IMR-90 (cell line): ENCODE measurements at regions of chr1 and their contacts with region 1.

Region 1: DNA sequence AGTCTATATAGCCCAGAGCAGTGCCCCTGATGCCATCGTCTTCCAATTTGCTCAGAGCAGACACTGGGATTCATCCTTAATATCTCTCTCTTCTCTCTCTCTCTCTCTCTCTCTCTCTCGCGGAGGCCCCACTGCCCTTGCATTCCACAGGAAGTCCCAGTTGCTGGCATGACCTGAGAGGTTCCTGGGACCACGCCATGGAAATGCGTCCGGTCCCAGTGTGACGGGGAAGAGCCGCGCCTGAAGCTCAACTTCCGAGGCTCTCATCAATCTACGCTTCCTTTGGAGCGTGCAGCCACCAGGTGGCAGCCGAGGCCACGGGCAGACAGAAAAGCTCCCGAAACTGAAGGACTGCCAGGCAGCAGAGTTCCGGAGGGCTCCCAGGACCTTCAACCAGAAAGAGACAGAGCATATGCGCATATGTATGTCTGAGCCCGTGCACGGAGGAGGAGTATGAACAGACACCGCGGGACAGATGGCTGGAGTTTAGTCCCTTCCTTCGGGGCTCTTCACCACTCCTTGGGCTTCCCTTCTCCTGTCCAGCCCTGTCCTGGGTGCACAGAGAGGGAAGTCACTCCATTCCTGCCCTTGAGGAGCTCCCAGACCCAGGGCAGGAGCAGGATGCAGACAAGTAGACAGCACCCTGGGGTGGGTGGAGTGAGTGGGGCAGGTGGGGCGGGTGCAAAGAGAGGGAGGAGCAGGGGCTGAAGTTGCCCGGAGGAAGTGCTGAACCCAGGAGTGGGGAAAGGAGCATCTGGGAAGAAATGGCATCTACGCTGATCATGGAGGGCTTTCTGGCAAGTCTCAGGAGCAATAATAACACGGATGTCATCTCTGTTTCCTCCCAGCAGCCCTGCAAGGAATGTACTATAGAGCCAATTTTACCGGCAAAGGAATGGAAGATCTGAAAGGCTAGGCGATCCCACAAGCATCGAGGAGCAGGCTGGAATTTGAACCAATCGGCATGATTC is 10.5 kb downstream of the PDZK1IP1 start:
- DNase-seq: peak; percentile 91
- ATAC-seq: peak; percentile 91
- H3K4me3 ChIP-seq: peak overlapping the region; percentile 27
- H3K27ac ChIP-seq: no peak overlapping the region
- H3K4me1 ChIP-seq: no peaks in the 10 kb centered on the region
- H3K27me3 ChIP-seq: no peaks in the 10 kb centered on the region; the same call in 1 of the 2 replicates
- CTCF ChIP-seq: peak; percentile 98
- POLR2A ChIP-seq: no peak
- RAD21 ChIP-seq: peak; percentile 93

Region 2: DNA sequence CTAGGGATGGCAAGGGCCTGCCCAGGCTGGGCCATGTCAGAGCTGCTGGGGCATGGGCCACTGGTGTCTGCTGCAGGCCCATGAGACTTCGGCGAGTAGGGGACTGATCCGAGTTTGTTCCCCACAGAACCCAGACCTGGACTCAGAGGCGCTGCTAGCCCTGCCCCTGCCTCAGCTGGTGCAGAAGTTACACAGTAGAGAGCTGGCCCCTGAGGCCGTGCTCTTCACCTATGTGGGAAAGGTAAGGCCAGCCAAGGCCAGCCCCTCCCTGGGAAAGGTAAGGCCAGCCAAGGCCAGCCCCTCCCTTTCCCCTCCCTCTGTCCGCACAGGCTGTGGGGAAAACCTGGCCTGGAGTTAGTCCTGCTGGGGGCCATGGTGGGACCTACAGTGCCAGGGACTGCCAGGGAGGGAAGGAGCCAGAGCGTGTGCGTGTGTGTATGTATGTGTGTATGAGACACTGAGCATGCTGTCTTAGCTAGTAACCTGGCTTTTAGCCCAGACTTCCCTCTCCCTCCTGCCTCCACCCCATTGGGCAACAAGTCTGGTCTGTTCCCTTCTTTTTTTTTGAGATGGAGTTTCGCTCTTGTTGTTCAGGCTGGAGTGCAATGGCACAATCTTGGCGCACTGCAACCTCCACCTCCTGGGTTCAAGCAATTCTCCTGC is 777.2 kb before region 1 on chr1:
- CTCF ChIA-PET with region 1: no interaction called
- POLR2A ChIA-PET with region 1: no interaction called
- dilution Hi-C with region 1: no loop called
- in situ Hi-C with region 1: no loop called
- intact Hi-C with region 1: loop called (anchors 10 kb)
- DNase-seq: peak; percentile 95
- ATAC-seq: peak; percentile 86
- H3K4me3 ChIP-seq: no peak overlapping the region
- H3K27ac ChIP-seq: no peak overlapping the region
- H3K4me1 ChIP-seq: no peaks in the 10 kb centered on the region; the same call in 1 of the 2 replicates
- H3K27me3 ChIP-seq: peaks cover 26% of the 10 kb centered on the region
- CTCF ChIP-seq: no peak
- POLR2A ChIP-seq: no peak
- RAD21 ChIP-seq: no peak

Region 3: GRCh38 chr1:46747683-46748288 is 431.5 kb before region 1 on chr1:
- CTCF ChIA-PET with region 1: no interaction called
- POLR2A ChIA-PET with region 1: no interaction called
- dilution Hi-C with region 1: no loop called
- in situ Hi-C with region 1: no loop called
- intact Hi-C with region 1: loop called (anchors 1 kb)
- DNase-seq: peak; percentile 55
- ATAC-seq: peak; percentile 100
- H3K4me3 ChIP-seq: no peak overlapping the region
- H3K27ac ChIP-seq: no peak overlapping the region
- H3K4me1 ChIP-seq: no peaks in the 10 kb centered on the region
- H3K27me3 ChIP-seq: no peaks in the 10 kb centered on the region
- CTCF ChIP-seq: peak; percentile 55
- POLR2A ChIP-seq: no peak
- RAD21 ChIP-seq: peak; percentile 47

Region 4: DNA sequence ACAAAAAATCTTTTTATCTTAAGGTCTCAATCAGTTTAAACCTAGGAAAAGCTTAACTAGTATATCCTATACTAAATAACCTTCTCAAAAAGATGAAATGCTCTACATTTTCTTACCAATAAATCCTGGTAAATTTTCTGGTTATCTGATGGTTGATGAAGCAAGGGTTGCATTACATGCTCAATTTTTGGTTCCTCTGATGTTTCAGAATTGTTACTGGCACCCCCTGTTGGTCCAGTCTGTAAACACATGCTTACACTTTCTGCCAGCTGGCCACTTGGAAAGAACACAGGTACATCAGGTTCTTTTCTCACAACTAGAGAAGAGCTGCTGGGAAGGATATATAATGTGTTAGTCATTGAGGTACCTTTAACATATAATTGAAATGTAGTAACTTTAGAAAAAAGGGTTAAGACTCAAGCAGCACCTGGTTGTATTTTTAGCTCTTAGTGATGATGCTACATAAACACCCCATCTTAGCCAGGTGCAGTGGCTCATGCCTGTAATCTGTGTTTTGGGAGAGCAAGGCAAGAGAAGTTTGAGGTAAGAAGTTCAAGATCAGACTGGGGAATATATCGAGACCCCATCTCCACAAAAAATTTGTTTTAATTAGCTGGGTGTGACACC is 83.6 kb after region 1 on chr1:
- CTCF ChIA-PET with region 1: interaction called, 14 read pairs
- POLR2A ChIA-PET with region 1: no interaction called
- dilution Hi-C with region 1: no loop called
- in situ Hi-C with region 1: no loop called
- intact Hi-C with region 1: no loop called
- DNase-seq: peak; percentile 38
- ATAC-seq: peak; percentile 73
- H3K4me3 ChIP-seq: no peak overlapping the region
- H3K27ac ChIP-seq: no peak overlapping the region
- H3K4me1 ChIP-seq: no peaks in the 10 kb centered on the region
- H3K27me3 ChIP-seq: no peaks in the 10 kb centered on the region
- CTCF ChIP-seq: peak; percentile 56
- POLR2A ChIP-seq: no peak
- RAD21 ChIP-seq: peak; percentile 51

Region 5: DNA sequence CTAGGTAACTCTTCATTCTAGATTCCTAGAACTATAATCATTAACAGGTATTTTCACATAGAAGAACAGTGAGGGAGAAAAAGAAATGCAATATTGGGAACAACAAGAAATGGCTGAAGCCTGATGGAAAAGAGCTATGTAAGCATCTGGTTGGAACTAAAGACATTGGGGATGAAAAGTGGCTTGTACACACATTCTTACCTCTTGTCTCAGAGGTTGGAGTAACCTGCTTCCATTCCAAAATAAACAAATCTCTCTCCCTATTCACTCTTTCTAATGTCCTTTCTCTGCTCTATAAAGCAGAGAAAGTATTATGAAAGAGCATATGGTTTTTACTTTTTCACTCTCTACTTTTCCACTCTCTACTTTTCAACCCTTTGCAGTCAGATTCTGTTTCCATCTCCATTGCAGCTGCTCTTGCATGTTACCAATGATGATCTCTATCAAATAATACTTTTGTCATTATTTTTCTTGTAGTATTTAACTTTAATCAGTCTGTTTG is 191.8 kb after region 1 on chr1:
- CTCF ChIA-PET with region 1: no interaction called
- POLR2A ChIA-PET with region 1: no interaction called
- dilution Hi-C with region 1: no loop called
- in situ Hi-C with region 1: no loop called
- intact Hi-C with region 1: no loop called
- DNase-seq: peak; percentile 70
- ATAC-seq: no peak
- H3K4me3 ChIP-seq: no peak overlapping the region
- H3K27ac ChIP-seq: no peak overlapping the region
- H3K4me1 ChIP-seq: peaks cover 5% of the 10 kb centered on the region; the same call in 1 of the 2 replicates
- H3K27me3 ChIP-seq: no peaks in the 10 kb centered on the region
- CTCF ChIP-seq: no peak
- POLR2A ChIP-seq: no peak
- RAD21 ChIP-seq: no peak

Region 6: DNA sequence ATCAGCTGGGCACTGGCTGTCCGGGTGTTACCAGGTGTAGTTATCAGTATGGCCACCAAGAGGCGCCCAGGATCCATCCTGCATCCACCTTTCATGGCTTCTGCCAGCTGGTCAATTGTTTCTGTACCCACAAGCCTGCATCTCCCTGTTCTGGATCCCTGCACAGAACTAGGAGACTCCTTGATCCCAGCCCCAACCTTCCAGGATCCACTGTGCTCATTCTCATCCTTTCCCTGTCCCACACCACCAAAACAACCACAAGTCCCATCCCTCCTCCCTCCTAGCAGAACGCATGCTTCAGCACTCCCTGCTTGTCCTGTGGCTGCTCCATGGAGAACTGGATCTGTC is 209.6 kb after region 1 on chr1:
- CTCF ChIA-PET with region 1: no interaction called
- POLR2A ChIA-PET with region 1: no interaction called
- dilution Hi-C with region 1: no loop called
- in situ Hi-C with region 1: no loop called
- intact Hi-C with region 1: loop called (anchors 1 kb)
- DNase-seq: peak; percentile 67
- ATAC-seq: peak; percentile 91
- H3K4me3 ChIP-seq: no peak overlapping the region
- H3K27ac ChIP-seq: no peak overlapping the region
- H3K4me1 ChIP-seq: peaks cover 2% of the 10 kb centered on the region; the same call in 1 of the 2 replicates
- H3K27me3 ChIP-seq: no peaks in the 10 kb centered on the region; the same call in 1 of the 2 replicates
- CTCF ChIP-seq: peak; percentile 90
- POLR2A ChIP-seq: no peak; the same call in 1 of the 2 replicates
- RAD21 ChIP-seq: peak; percentile 96

Region 7: DNA sequence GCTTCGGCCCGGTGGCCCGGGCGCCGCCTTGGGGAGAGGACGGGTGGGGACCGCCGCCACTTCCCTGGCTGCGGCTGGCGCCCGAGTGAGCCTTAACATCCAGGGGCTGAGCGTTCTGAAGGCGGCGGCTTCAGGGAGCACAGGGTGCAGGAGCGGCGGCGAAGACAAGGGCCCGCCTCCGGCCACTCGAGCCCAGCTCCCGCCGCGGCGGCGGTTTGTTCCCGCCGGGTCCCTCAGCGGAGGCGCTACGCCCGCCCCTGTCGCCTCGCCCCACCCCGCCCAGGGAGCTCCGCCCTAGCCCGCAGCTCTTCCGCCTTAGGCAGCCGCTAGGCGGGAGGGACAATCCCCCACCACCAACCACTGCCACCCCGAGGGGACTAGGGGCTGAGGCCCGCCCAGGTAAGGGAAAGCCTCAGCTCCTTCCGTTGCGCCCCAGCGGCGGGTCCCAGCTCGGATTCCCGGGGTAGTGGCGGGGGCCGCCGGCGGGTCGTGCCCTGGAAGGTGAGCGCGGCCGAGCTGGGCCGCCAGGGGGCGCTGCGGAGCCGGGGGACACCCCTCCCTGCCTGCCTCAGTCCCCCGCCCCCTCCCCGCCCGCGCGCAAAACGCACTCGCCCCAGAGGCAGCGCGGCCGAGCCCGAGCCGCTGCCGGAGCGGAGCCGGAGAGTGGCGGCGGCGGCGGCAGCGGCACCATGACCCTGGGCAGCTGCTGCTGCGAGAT is 258.3 kb after region 1 on chr1 and contains the start of gene FOXD2:
- CTCF ChIA-PET with region 1: interaction called, 11 read pairs
- POLR2A ChIA-PET with region 1: no interaction called
- dilution Hi-C with region 1: no loop called
- in situ Hi-C with region 1: no loop called
- intact Hi-C with region 1: loop called (anchors 1 kb)
- DNase-seq: peak; percentile 66
- ATAC-seq: peak; percentile 92
- H3K4me3 ChIP-seq: peak within 1 kb of the TSS; percentile 74
- H3K27ac ChIP-seq: peak within 1 kb of the TSS; percentile 88
- H3K4me1 ChIP-seq: peaks cover 2% of the 10 kb centered on the region; the same call in 1 of the 2 replicates
- H3K27me3 ChIP-seq: peaks cover 44% of the 10 kb centered on the region
- CTCF ChIP-seq: peak; percentile 78
- POLR2A ChIP-seq: peak; percentile 37
- RAD21 ChIP-seq: no peak
- total RNA-seq, gene FOXD2: under 0.01 TPM in 2 replicates

Region 8: DNA sequence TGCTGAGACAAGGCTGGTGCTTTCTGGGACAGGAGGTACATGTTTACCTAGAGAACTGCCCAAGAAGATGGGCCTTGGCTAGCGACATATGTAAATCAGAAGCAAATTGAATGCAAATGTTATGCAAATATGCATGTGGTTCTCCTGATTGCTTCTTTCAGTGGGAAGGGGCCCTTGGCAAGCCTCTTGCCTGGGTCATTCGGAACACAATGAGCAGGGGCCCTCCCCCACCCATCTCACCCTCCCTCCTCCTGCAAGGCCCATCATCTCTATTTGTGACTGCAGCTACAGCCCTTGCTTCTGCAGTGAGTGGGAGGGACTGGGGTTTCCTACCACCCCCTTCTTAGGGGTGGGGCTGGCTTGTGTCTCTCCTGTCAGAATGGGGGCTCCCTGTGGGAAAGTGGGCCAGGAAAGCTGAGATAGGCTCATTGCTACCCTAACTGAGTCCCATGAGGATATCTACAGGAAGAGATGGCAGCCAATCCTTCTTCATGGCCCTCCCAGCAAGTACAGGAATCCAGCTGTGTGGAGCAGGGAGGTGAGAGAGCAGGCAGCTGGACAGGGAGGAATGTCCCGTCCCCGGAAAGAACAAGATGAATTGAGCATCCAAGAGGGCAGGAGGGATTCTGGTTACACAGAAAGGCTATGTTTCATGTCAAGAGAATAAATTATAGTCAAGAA is 289.5 kb after region 1 on chr1:
- CTCF ChIA-PET with region 1: no interaction called
- POLR2A ChIA-PET with region 1: no interaction called
- dilution Hi-C with region 1: no loop called
- in situ Hi-C with region 1: no loop called
- intact Hi-C with region 1: no loop called
- DNase-seq: no peak
- ATAC-seq: no peak
- H3K4me3 ChIP-seq: no peak overlapping the region
- H3K27ac ChIP-seq: no peak overlapping the region
- H3K4me1 ChIP-seq: no peaks in the 10 kb centered on the region
- H3K27me3 ChIP-seq: peaks cover 2% of the 10 kb centered on the region; the same call in 1 of the 2 replicates
- CTCF ChIP-seq: no peak
- POLR2A ChIP-seq: no peak
- RAD21 ChIP-seq: no peak

Region 9: DNA sequence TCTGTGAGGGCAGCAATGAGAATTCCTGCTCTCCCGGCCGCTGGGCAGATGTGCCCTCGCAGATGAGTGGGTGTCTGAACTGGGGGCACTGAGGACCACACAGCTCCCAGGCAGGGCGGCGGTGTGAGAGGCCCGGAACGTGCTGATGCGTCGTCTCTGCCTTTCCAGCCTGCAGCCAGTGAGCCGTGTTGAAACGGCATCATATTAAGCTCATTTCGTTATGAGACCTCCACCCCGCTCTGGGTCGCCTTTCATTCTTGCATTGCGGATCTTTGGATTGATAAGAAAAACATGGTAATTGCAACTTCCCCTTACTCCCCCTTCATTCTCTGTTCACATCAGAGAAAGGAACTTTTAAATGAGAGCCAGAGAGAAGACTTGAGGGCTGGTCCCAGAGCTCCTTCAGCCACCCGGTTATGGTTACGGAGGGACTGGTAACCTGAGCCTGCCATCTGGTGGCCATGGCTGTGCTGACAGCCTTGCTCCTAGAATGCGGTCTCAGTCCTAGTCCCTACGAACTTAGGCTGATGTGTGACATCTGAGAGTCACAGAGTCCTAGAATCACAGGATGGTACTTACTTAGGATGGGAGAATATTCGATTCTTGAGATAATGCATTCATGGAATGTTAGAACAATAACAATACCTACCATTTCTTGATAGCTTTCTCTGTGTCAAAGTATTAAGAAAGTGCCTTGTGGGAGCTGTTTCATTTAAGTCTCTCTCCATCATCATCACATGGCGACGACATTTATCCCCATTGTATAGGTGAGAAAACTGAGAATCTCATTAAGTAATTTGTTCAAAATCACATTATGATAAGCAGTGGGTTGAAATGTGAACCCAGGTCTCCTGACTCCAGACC is 546.9 kb after region 1 on chr1:
- CTCF ChIA-PET with region 1: interaction called, 9 read pairs
- POLR2A ChIA-PET with region 1: no interaction called
- dilution Hi-C with region 1: no loop called
- in situ Hi-C with region 1: no loop called
- intact Hi-C with region 1: loop called (anchors 1 kb)
- DNase-seq: peak; percentile 63
- ATAC-seq: peak; percentile 98
- H3K4me3 ChIP-seq: no peak overlapping the region
- H3K27ac ChIP-seq: no peak overlapping the region
- H3K4me1 ChIP-seq: no peaks in the 10 kb centered on the region
- H3K27me3 ChIP-seq: peaks cover 21% of the 10 kb centered on the region
- CTCF ChIP-seq: peak; percentile 79
- POLR2A ChIP-seq: no peak
- RAD21 ChIP-seq: peak; percentile 66